PC-9 (cell line): ENCODE measurements at regions of chr11 and their contacts with region 1.

Region 1: DNA sequence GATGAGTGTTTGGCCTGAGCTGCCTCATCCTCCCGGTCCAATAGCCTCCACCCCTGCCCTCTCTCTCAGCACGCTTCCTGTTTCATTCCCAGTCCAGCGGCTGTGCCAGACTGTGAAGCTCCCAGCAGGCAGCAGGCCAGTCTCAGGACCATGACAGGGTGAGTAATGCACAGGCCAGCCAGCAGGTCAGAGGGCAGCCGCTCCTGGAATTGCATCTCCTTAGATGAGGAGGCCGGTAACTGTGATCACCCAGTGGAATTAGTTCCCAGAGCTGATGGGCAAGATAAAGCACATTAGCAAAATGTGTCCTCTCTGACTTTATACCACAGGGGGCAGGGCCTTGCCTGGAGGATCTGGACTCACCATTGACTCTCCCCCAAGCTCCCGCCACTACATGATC is 251.2 kb downstream of the ETS1 start:
- DNase-seq: peak; percentile 88 to 98
- H3K4me3 ChIP-seq: no peak overlapping the region
- H3K27ac ChIP-seq: 0 out of 2 replicates have a peak overlapping the region, but pooled peaks have one; percentile 40
- H3K4me1 ChIP-seq: peaks cover 19% of the 10 kb centered on the region
- H3K27me3 ChIP-seq: no peaks in the 10 kb centered on the region
- CTCF ChIP-seq: peak; percentile 22; the same call in 1 of the 2 replicates

Region 2: GRCh38 chr11:128407962-128408361 is 71.8 kb after region 1 on chr11:
- CTCF ChIA-PET with region 1: no interaction called
- POLR2A ChIA-PET with region 1: no interaction called
- intact Hi-C with region 1: loop called (anchors 2 kb)
- DNase-seq: peak; percentile 27 to 91
- H3K4me3 ChIP-seq: no peak overlapping the region
- H3K27ac ChIP-seq: peak overlapping the region; percentile 44
- H3K4me1 ChIP-seq: peaks cover 30% of the 10 kb centered on the region
- H3K27me3 ChIP-seq: no peaks in the 10 kb centered on the region
- CTCF ChIP-seq: no peak

Region 3: DNA sequence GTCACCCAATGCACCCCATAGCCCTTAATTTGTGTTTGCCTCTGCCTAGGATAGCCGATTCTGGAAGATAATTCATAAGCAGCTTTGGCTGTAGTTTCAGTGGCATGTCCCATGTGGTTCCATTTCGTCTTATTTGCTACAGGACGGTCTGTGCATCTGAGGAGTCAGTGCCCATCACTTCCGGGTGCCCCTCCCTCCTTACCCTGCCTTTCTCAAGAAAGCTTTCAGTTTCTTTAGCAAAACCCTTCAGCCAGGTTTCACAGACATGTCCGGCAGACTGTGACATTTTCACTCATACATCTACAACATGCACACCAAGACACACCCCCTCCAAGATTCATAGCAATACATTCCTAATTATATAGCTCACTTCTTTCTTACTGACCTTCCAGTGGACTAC is 592.2 kb after region 1 on chr11:
- CTCF ChIA-PET with region 1: no interaction called
- POLR2A ChIA-PET with region 1: no interaction called
- intact Hi-C with region 1: no loop called
- DNase-seq: no peak
- H3K4me3 ChIP-seq: no peak overlapping the region
- H3K27ac ChIP-seq: no peak overlapping the region
- H3K4me1 ChIP-seq: no peaks in the 10 kb centered on the region
- H3K27me3 ChIP-seq: peaks cover 57% of the 10 kb centered on the region
- CTCF ChIP-seq: no peak